Naive thymus-derived CD4-positive, alpha-beta T cell (primary cell): ENCODE measurements at regions of chr12 and their contacts with region 1.

Region 1: DNA sequence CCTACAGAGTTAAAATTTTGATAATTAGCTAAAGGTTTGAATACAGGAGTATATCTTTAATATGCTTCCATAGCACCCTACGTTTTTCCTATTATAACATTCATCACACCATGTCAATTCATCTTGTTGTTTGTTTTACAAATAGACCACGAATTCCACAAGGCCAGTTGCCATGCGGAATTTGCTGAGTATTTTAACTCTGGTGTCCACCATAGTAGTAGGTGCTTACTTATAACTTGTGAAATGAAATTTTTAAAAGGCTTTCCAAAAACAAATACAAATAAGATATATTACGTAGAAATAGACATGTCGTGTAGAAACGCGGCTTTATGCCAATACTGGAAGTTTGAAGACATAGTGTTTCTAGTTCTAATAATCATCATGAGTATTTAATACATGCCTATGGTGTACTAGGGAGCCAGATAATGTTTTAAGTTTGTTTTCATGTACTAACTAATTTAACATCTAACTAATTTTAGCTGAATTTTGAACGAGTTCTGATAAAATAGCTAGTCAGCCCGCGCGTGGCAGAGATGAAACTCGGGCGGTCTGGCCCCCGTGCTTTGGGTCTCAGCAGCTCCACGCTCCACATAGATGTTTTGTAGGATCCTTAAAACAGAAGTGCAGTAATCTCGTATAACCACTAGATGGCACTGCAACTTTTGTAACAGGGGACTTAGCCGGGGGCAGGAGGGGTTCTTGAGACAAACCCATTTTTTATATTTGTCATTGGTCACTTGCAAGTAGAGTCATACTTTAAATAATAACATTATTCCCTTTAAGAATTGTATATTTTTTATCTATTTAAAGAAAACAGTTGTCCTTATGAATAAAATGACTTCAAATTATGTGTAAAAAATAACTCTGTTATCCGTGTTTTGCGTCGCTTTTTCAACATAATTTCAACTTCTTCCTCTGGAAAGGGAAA is 10.2 kb downstream of the CD69 start:
- DNase-seq: peak in 8 of 9 donors; percentile 51 to 78 (median 72)
- ATAC-seq: peak; percentile 73
- H3K4me3 ChIP-seq: no peak overlapping the region
- H3K4me3 Mint-ChIP-seq: peak overlapping the region; percentile 5 to 87 (median 76)
- H3K27ac ChIP-seq: peak overlapping the region; percentile 67
- H3K27ac Mint-ChIP-seq: peak overlapping the region; percentile 54 to 97 (median 81)
- H3K4me1 ChIP-seq: peaks cover 26 to 33% of the 10 kb centered on the region in 2 donors
- H3K4me1 Mint-ChIP-seq: peaks cover 19 to 61% (median 53%) of the 10 kb centered on the region in 7 donors
- H3K27me3 ChIP-seq: no peaks in the 10 kb centered on the region
- H3K27me3 Mint-ChIP-seq: peaks cover 0 to 4% (median 0%) of the 10 kb centered on the region in 5 donors

Region 2: DNA sequence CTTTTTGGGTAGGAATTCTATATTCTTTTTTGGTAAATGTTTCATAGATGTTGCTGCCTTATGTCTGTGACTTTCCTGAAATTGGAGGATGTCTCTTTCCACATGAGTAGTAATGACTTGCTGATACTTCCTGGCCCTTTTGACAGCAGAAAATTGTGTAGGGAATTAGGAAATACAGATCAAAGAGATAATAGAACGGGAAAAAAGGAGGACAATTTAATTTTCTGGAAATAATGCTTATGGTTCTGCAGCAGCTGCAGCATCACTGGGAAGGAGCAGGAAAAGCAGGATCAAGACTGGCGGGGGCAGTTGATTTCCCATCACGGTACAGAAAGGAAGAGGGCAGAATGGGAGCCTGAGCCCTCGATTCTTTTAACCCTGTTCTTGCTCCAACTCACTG is 473.6 kb before region 1 on chr12:
- CTCF ChIA-PET with region 1: no interaction called
- POLR2A ChIA-PET with region 1: no interaction called
- intact Hi-C with region 1: no loop called
- DNase-seq: no peak
- ATAC-seq: no peak
- H3K4me3 ChIP-seq: no peak overlapping the region
- H3K4me3 Mint-ChIP-seq: no peak overlapping the region
- H3K27ac ChIP-seq: no peak overlapping the region
- H3K27ac Mint-ChIP-seq: no peak overlapping the region
- H3K4me1 ChIP-seq: no peaks in the 10 kb centered on the region
- H3K4me1 Mint-ChIP-seq: no peaks in the 10 kb centered on the region
- H3K27me3 ChIP-seq: no peaks in the 10 kb centered on the region
- H3K27me3 Mint-ChIP-seq: peaks cover 0 to 31% (median 17%) of the 10 kb centered on the region in 5 donors

Region 3: DNA sequence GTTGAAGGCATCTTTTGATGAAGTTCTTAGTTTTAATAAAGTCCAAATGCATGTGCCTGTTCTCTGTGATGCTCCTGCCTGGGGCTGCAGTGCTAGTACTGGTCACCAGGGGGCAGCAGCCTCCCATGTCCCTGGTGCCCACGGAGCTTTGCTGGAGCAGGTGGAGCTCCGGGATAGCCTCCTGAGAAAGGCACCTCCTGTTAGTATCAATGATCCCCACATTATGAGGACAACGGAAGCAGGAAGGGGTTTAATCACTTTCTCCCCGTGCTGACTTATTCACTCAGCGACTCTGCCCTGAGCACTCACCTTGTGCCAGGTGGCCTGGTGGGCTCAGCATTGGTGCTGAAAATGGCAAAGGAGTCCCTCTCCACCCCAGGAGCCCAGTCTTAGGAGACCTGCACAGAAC is 419.3 kb before region 1 on chr12:
- CTCF ChIA-PET with region 1: interaction called, 6 read pairs
- POLR2A ChIA-PET with region 1: interaction called, 3 read pairs
- intact Hi-C with region 1: loop called in 1 of 2 experiments (anchors 1 kb)
- DNase-seq: peak; percentile 21 to 77 (median 55)
- ATAC-seq: peak; percentile 87
- H3K4me3 ChIP-seq: no peak overlapping the region
- H3K4me3 Mint-ChIP-seq: peak overlapping the region in 2 of 10 donors; percentile 6 to 33
- H3K27ac ChIP-seq: no peak overlapping the region
- H3K27ac Mint-ChIP-seq: peak overlapping the region in 4 of 9 donors; percentile 50 to 66 (median 62)
- H3K4me1 ChIP-seq: peaks cover 0 to 3% of the 10 kb centered on the region in 2 donors
- H3K4me1 Mint-ChIP-seq: peaks cover 18 to 31% (median 23%) of the 10 kb centered on the region in 7 donors
- H3K27me3 ChIP-seq: no peaks in the 10 kb centered on the region
- H3K27me3 Mint-ChIP-seq: peaks cover 0 to 2% (median 0%) of the 10 kb centered on the region in 5 donors

Region 4: GRCh38 chr12:9647825-9648700 is 102.5 kb before region 1 on chr12:
- CTCF ChIA-PET with region 1: interaction called, 7 read pairs
- POLR2A ChIA-PET with region 1: interaction called, 60 read pairs
- intact Hi-C with region 1: no loop called
- DNase-seq: peak; percentile 77 to 97 (median 92)
- ATAC-seq: peak; percentile 81
- H3K4me3 ChIP-seq: peak overlapping the region; percentile 67
- H3K4me3 Mint-ChIP-seq: peak overlapping the region; percentile 93 to 100 (median 98)
- H3K27ac ChIP-seq: peak overlapping the region; percentile 92
- H3K27ac Mint-ChIP-seq: peak overlapping the region; percentile 92 to 100 (median 98)
- H3K4me1 ChIP-seq: peaks cover 29 to 42% of the 10 kb centered on the region in 2 donors
- H3K4me1 Mint-ChIP-seq: peaks cover 32 to 65% (median 60%) of the 10 kb centered on the region in 7 donors
- H3K27me3 ChIP-seq: no peaks in the 10 kb centered on the region
- H3K27me3 Mint-ChIP-seq: peaks cover 0 to 5% (median 0%) of the 10 kb centered on the region in 5 donors

Region 5: GRCh38 chr12:9773216-9773877 is 22.8 kb after region 1 on chr12:
- CTCF ChIA-PET with region 1: interaction called, 12 read pairs
- POLR2A ChIA-PET with region 1: interaction called, 106 read pairs
- intact Hi-C with region 1: no loop called
- DNase-seq: peak in 4 of 9 donors; percentile 41 to 70 (median 63)
- ATAC-seq: peak; percentile 78
- H3K4me3 ChIP-seq: peak overlapping the region; percentile 29
- H3K4me3 Mint-ChIP-seq: peak overlapping the region; percentile 4 to 78 (median 70)
- H3K27ac ChIP-seq: no peak overlapping the region
- H3K27ac Mint-ChIP-seq: peak overlapping the region; percentile 36 to 87 (median 73)
- H3K4me1 ChIP-seq: peaks cover 40 to 46% of the 10 kb centered on the region in 2 donors
- H3K4me1 Mint-ChIP-seq: peaks cover 46 to 91% (median 81%) of the 10 kb centered on the region in 7 donors
- H3K27me3 ChIP-seq: no peaks in the 10 kb centered on the region
- H3K27me3 Mint-ChIP-seq: no peaks in the 10 kb centered on the region

Region 6: DNA sequence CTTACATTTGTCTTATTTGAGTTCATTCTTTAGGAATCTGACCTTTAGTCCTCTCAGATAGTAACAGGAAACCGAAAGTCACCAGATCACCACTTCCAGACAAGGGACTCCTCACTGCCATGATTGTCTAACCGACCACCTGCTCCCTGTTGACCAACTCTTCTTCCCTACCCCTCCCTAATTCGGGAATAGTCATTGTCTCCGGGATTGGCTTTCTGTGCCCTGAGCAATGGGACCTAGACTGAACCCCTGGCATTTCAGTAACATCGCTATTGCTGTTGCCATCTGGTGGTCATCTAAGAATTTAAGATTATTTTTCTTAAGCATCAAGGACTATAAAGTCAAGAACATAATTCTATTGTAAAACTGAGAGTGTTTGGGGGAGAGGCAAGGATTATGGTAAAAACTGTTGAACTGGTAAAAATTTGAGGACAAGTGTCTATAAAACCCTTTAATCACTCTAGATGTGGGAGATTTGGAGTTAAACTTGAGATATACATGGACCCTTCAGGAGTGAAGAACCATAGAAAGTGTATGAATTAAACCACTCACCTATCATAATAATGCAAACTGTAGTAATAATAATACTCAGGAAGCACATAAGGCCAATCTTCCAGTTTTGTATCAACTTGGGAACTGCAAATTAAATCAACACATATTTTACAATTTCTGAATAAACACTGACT is 175.3 kb after region 1 on chr12:
- CTCF ChIA-PET with region 1: interaction called, 57 read pairs
- POLR2A ChIA-PET with region 1: interaction called, 4 read pairs
- intact Hi-C with region 1: loop called (anchors 1 kb)
- DNase-seq: peak in 8 of 9 donors; percentile 7 to 64 (median 50)
- ATAC-seq: peak; percentile 73
- H3K4me3 ChIP-seq: no peak overlapping the region
- H3K4me3 Mint-ChIP-seq: peak overlapping the region; percentile 30 to 85 (median 73)
- H3K27ac ChIP-seq: no peak overlapping the region
- H3K27ac Mint-ChIP-seq: peak overlapping the region in 6 of 9 donors; percentile 5 to 93 (median 44)
- H3K4me1 ChIP-seq: peaks cover 0 to 6% of the 10 kb centered on the region in 2 donors
- H3K4me1 Mint-ChIP-seq: peaks cover 0 to 26% (median 18%) of the 10 kb centered on the region in 7 donors
- H3K27me3 ChIP-seq: no peaks in the 10 kb centered on the region
- H3K27me3 Mint-ChIP-seq: peaks cover 0 to 23% (median 0%) of the 10 kb centered on the region in 5 donors

Region 7: GRCh38 chr12:9940375-9940774 is 189.8 kb after region 1 on chr12:
- CTCF ChIA-PET with region 1: interaction called, 10 read pairs
- POLR2A ChIA-PET with region 1: no interaction called
- intact Hi-C with region 1: loop called (anchors 5 kb)
- DNase-seq: peak in 3 of 9 donors; percentile 20 to 36 (median 24)
- ATAC-seq: no peak
- H3K4me3 ChIP-seq: no peak overlapping the region
- H3K4me3 Mint-ChIP-seq: no peak overlapping the region
- H3K27ac ChIP-seq: no peak overlapping the region
- H3K27ac Mint-ChIP-seq: peak overlapping the region in 2 of 9 donors; percentile 8 to 32
- H3K4me1 ChIP-seq: no peaks in the 10 kb centered on the region
- H3K4me1 Mint-ChIP-seq: peaks cover 7 to 27% (median 14%) of the 10 kb centered on the region in 7 donors
- H3K27me3 ChIP-seq: no peaks in the 10 kb centered on the region
- H3K27me3 Mint-ChIP-seq: peaks cover 0 to 34% (median 0%) of the 10 kb centered on the region in 5 donors

Region 8: DNA sequence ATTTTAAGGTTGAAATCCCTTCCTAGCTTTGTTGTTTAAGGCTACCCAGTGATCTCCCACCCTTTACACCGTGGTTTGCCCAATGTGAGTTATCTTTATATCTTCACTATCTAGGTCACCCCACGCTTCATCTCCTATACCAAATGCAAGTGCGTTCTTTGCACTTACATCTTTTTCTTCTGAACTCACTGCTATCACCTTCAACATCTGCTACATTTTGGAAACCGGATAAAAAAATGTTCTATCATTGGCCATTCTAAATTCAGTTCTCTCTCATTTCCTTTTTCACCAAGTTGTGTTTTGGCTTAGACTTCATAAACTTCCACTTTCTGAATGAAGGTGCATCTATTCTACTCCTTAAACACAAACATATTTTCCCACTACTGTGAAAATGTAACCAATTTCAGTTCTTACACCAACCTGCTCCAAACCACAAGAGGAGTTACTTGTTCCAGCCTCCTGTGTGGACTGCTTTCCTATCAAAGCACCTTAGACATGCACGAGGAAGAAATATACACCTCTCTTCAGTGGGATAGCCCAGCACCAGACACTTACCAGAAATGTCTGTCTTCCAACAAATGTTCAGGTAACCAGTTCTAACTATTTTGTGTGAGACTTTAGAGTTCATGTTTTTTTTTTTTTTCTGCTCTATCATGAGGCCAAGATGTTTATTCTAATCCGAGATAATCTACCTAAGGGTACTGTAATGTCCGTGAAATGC is 301.8 kb after region 1 on chr12:
- CTCF ChIA-PET with region 1: no interaction called
- POLR2A ChIA-PET with region 1: no interaction called
- intact Hi-C with region 1: no loop called
- DNase-seq: no peak
- ATAC-seq: no peak
- H3K4me3 ChIP-seq: no peak overlapping the region
- H3K4me3 Mint-ChIP-seq: peak overlapping the region in 1 of 10 donors; percentile 1
- H3K27ac ChIP-seq: no peak overlapping the region
- H3K27ac Mint-ChIP-seq: no peak overlapping the region
- H3K4me1 ChIP-seq: no peaks in the 10 kb centered on the region
- H3K4me1 Mint-ChIP-seq: peaks cover 5 to 8% (median 7%) of the 10 kb centered on the region in 7 donors
- H3K27me3 ChIP-seq: no peaks in the 10 kb centered on the region
- H3K27me3 Mint-ChIP-seq: peaks cover 11 to 47% (median 29%) of the 10 kb centered on the region in 5 donors

Region 9: DNA sequence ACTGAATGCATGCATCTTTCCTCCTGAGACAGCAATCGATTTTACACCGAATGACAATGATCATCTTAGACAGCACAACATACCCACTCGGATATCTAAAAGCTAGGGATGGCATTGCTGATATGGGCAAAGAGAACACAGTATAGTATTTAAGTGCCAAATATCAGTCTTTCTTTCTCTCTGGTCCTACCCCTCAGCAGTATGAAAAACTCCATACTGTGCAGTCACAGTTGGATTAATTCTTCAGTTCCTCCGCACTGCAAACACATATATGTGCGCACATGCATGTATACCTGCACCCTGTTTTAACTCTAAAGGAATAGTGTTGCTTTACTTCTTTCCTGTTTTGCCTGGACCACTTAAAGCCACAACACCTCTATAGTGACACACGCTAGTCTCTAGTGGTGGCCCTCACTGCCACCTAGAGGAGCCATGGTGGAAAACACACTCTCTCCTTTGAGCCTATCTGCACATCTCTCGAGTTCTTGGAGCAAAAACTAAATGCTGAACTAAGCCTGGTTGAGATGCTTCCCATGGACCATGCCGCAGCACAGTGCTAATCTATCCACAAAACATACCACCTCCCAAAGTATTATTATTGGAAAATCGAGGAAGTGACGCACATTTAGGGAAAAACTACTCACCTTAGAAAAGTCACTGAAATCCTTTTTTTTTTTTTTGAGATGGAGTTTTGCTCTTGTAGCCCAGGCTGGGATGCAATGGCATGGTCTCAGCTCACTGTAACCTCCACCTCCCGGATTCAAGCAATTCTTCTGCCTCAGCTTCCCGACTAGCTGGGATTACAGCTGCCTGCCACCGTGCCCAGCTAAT is 440.2 kb after region 1 on chr12:
- CTCF ChIA-PET with region 1: interaction called, 4 read pairs
- POLR2A ChIA-PET with region 1: no interaction called
- intact Hi-C with region 1: loop called (anchors 1 to 2 kb)
- DNase-seq: peak; percentile 21 to 65 (median 48)
- ATAC-seq: peak; percentile 97
- H3K4me3 ChIP-seq: no peak overlapping the region
- H3K4me3 Mint-ChIP-seq: no peak overlapping the region
- H3K27ac ChIP-seq: no peak overlapping the region
- H3K27ac Mint-ChIP-seq: no peak overlapping the region
- H3K4me1 ChIP-seq: no peaks in the 10 kb centered on the region
- H3K4me1 Mint-ChIP-seq: peaks cover 0 to 8% (median 0%) of the 10 kb centered on the region in 7 donors
- H3K27me3 ChIP-seq: no peaks in the 10 kb centered on the region
- H3K27me3 Mint-ChIP-seq: peaks cover 8 to 32% (median 13%) of the 10 kb centered on the region in 5 donors